Right ventricle myocardium superior (tissue), 1 donor: ENCODE measurements at regions of chr2 and their contacts with region 1.

Region 1: GRCh38 chr2:119659601-119660342 is 19.2 kb upstream of the TMEM177 start:
- DNase-seq: no peak
- ATAC-seq: peak; percentile 66

Region 2: GRCh38 chr2:119517433-119517832 is 142.3 kb before region 1 on chr2:
- intact Hi-C with region 1: loop called (anchors 10 kb)
- DNase-seq: peak; percentile 68
- ATAC-seq: peak; percentile 85

Region 3: GRCh38 chr2:120026890-120027289 is 367.1 kb after region 1 on chr2:
- intact Hi-C with region 1: no loop called
- DNase-seq: no peak
- ATAC-seq: no peak